ENCODE measurements at regions of chr5 and their contacts with region 1.

Region 1: GRCh38 chr5:173823711-173824528 is 64.2 kb upstream of the CPEB4 start:
- DNase-seq: no peak
- ATAC-seq: no peak
- H3K4me3 ChIP-seq: no peak overlapping the region
- H3K27ac ChIP-seq: peak overlapping the region; percentile 96
- H3K4me1 ChIP-seq: peaks cover 55% of the 10 kb centered on the region
- H3K27me3 ChIP-seq: no peaks in the 10 kb centered on the region
- CTCF ChIP-seq: no peak
- EP300 ChIP-seq: no peak
- POLR2A ChIP-seq: no peak
- RAD21 ChIP-seq: no peak

Region 2: DNA sequence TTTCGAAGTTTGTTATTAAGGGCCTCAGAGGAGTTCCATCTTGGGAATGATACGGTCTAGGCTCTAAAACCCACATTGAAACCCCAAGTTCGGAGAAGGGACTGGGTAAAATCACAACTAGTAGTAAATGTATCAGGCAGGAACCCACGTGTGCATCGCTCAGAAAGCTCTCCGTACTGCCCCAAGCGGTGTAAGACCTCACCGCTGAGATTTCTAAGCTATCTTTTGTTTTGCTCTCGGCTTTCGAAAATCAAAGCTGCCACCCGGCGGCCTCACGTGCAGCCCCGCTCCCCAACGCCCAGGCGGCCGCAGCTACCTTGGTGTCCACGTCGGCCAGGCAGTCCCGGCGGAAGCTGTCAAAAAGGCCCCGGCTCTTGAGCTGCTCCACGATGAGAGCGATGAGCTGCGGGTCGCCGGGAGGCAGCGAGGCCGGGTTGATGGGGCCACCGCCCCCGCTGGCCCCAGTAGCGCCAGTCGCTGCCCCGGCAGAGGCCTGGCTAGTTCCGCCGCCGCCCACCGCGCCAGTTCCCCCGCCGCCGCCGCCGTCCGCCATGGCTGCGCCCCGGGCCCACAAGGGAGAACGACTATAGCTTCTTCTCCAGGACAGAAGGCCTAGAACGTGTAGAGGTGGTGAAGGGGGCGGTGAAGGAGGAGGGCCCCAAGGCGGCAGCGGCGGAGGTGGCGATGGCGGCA is 207.9 kb before region 1 on chr5:
- CTCF ChIA-PET with region 1: interaction called, 8 read pairs
- POLR2A ChIA-PET with region 1: no interaction called
- RAD21 ChIA-PET with region 1: interaction called, 5 read pairs
- SMC1A ChIA-PET with region 1: interaction called, 6 read pairs
- in situ Hi-C with region 1: no loop called
- intact Hi-C with region 1: loop called (anchors 5 kb)
- DNase-seq: peak; percentile 43
- ATAC-seq: peak; percentile 86
- H3K4me3 ChIP-seq: peak overlapping the region; percentile 66
- H3K27ac ChIP-seq: peak overlapping the region; percentile 72
- H3K4me1 ChIP-seq: peaks cover 14% of the 10 kb centered on the region
- H3K27me3 ChIP-seq: no peaks in the 10 kb centered on the region
- CTCF ChIP-seq: peak; percentile 70 to 82 (median 77)
- EP300 ChIP-seq: no peak
- POLR2A ChIP-seq: peak; percentile 73
- RAD21 ChIP-seq: peak; percentile 29; the same call in 1 of the 2 replicates

Region 3: GRCh38 chr5:173679909-173680630 is 143.8 kb before region 1 on chr5:
- CTCF ChIA-PET with region 1: interaction called, 3 read pairs
- POLR2A ChIA-PET with region 1: interaction called, 3 read pairs
- RAD21 ChIA-PET with region 1: interaction called, 11 read pairs
- SMC1A ChIA-PET with region 1: interaction called, 14 read pairs
- in situ Hi-C with region 1: no loop called
- intact Hi-C with region 1: loop called (anchors 5 kb)
- DNase-seq: peak; percentile 47
- ATAC-seq: peak; percentile 84
- H3K4me3 ChIP-seq: no peak overlapping the region
- H3K27ac ChIP-seq: peak overlapping the region; percentile 72
- H3K4me1 ChIP-seq: peaks cover 22% of the 10 kb centered on the region
- H3K27me3 ChIP-seq: no peaks in the 10 kb centered on the region
- CTCF ChIP-seq: no peak
- EP300 ChIP-seq: no peak
- POLR2A ChIP-seq: no peak
- RAD21 ChIP-seq: no peak

Region 4: GRCh38 chr5:173745123-173745522 is 78.8 kb before region 1 on chr5:
- CTCF ChIA-PET with region 1: interaction called, 4 read pairs
- POLR2A ChIA-PET with region 1: interaction called, 20 read pairs
- RAD21 ChIA-PET with region 1: interaction called, 17 read pairs
- SMC1A ChIA-PET with region 1: interaction called, 42 read pairs
- in situ Hi-C with region 1: loop called (anchors 5 kb)
- intact Hi-C with region 1: loop called (anchors 2 kb)
- DNase-seq: peak; percentile 47
- ATAC-seq: peak; percentile 64
- H3K4me3 ChIP-seq: no peak overlapping the region
- H3K27ac ChIP-seq: peak overlapping the region; percentile 95
- H3K4me1 ChIP-seq: peaks cover 54% of the 10 kb centered on the region
- H3K27me3 ChIP-seq: no peaks in the 10 kb centered on the region
- CTCF ChIP-seq: no peak
- EP300 ChIP-seq: no peak; a peak in 1 of 4 replicates
- POLR2A ChIP-seq: no peak
- RAD21 ChIP-seq: 0 out of 2 replicates have a peak, but pooled peaks have one; percentile 0

Region 5: GRCh38 chr5:173887610-173888472 is 63.9 kb after region 1 on chr5 and contains the start of gene CPEB4:
- CTCF ChIA-PET with region 1: interaction called, 43 read pairs
- POLR2A ChIA-PET with region 1: interaction called, 240 read pairs
- RAD21 ChIA-PET with region 1: interaction called, 395 read pairs
- SMC1A ChIA-PET with region 1: interaction called, 283 read pairs
- in situ Hi-C with region 1: loop called (anchors 5 kb)
- intact Hi-C with region 1: loop called (anchors 1 kb)
- DNase-seq: peak; percentile 99
- ATAC-seq: peak; percentile 90
- H3K4me3 ChIP-seq: peak within 1 kb of the TSS; percentile 94
- H3K27ac ChIP-seq: peak within 1 kb of the TSS; percentile 100
- H3K4me1 ChIP-seq: peaks cover 30% of the 10 kb centered on the region
- H3K27me3 ChIP-seq: no peaks in the 10 kb centered on the region
- CTCF ChIP-seq: no peak
- EP300 ChIP-seq: peak in 1 of 2 experiments; percentile 41; a peak in 1 of 4 replicates
- POLR2A ChIP-seq: peak; percentile 92
- RAD21 ChIP-seq: 0 out of 2 replicates have a peak, but pooled peaks have one; percentile 10
- polyA plus RNA-seq, gene CPEB4: 6.9 to 20.3 TPM

Region 6: DNA sequence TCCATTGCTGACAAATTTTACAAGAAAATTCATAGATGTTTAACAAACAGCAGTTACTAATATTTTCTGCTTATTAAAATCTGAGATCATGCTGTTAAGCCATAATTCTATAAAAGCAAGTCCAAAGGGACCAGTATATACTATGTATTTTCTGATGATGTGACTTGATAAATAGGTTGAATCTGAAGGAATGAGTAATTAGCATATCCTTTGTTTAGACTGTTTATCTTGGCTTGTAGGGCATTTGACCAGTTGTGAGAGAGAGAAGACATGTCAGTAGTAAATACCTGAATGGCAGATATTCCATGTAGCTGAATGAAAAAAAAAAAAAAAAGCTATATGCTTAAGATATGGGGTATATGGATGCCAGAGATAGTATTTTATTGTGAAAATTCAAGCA is 78.8 kb after region 1 on chr5:
- CTCF ChIA-PET with region 1: interaction called, 4 read pairs
- POLR2A ChIA-PET with region 1: interaction called, 240 read pairs
- RAD21 ChIA-PET with region 1: interaction called, 395 read pairs
- SMC1A ChIA-PET with region 1: interaction called, 22 read pairs
- in situ Hi-C with region 1: no loop called
- intact Hi-C with region 1: no loop called
- DNase-seq: no peak
- ATAC-seq: no peak
- H3K4me3 ChIP-seq: 0 out of 2 replicates have a peak overlapping the region, but pooled peaks have one; percentile 0
- H3K27ac ChIP-seq: peak overlapping the region; percentile 59
- H3K4me1 ChIP-seq: peaks cover 28% of the 10 kb centered on the region
- H3K27me3 ChIP-seq: no peaks in the 10 kb centered on the region
- CTCF ChIP-seq: no peak
- EP300 ChIP-seq: no peak
- POLR2A ChIP-seq: no peak
- RAD21 ChIP-seq: no peak

Region 7: DNA sequence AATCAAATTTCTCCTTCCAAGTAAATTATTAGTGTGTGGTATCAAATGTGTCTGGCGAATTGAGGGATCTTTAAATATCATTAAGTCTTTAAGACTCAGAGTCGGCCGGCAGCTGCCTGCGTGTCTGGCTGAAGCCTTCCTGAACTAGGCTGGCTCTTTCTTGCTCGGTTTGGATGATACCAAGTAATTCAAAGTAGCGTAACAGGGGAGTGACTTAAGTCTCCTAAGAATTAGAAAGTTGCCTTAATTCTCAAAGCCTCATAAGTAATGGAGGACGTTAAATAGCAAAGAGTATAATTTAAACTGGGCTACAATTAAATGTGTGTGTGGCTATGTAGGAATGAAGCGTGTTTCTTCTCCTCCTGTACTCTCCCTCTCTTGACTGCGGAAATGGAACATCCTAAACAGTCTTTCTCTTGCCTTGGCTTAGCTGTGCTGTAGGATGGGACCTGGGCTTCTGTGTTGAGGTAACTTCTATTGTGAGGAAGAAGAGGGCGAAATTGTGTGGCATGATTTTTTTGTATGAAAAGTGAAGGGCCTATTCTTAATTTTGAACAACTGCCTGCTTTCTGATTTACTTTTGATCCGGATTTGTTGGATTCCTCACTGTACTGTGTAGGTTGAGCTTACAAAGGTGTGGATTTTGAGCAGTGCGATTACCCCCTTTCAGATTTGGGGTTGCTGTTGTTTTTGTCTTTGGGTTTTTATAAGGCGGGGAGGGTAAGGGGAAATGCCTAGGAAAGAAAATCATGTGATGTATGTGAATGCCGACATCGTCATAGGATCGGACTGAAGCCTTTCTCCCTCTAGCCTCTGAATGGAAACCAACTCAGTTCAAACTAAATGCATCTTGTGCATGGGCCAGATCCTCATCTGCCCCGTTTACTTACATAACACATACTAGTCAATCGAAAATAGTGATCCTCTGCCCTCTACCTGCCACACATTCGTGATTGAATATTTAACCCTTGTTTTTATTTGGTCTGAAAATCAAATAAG is 94.2 kb after region 1 on chr5:
- CTCF ChIA-PET with region 1: interaction called, 5 read pairs
- POLR2A ChIA-PET with region 1: interaction called, 17 read pairs
- RAD21 ChIA-PET with region 1: interaction called, 28 read pairs
- SMC1A ChIA-PET with region 1: interaction called, 40 read pairs
- in situ Hi-C with region 1: no loop called
- intact Hi-C with region 1: loop called (anchors 5 kb)
- DNase-seq: peak; percentile 86
- ATAC-seq: peak; percentile 93
- H3K4me3 ChIP-seq: peak overlapping the region; percentile 77
- H3K27ac ChIP-seq: peak overlapping the region; percentile 76
- H3K4me1 ChIP-seq: peaks cover 18% of the 10 kb centered on the region
- H3K27me3 ChIP-seq: no peaks in the 10 kb centered on the region
- CTCF ChIP-seq: peak in 2 of 3 experiments; percentile 9 to 42; a peak in 2 of 6 replicates
- EP300 ChIP-seq: no peak
- POLR2A ChIP-seq: peak; percentile 85
- RAD21 ChIP-seq: peak; percentile 47

Region 8: DNA sequence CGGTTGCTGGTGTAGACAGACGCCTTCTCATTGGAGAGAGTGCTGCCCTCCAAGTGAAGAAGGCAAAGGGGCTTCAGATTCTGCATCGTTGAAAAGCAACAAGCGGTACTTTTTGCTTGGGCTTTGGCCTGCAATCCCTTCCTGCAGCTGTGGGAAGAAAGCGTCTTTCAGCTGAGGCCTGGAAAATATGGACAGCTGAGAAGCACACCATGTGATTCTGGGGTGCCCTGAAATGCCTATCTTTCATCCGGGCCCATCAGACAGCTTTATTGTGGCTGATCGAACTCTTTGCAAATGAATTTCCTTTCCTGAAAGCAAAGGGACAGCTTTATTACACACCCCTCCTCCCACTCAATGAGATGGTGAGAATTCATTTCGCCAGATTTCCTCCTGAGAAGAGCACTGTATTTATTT is 295.6 kb after region 1 on chr5:
- CTCF ChIA-PET with region 1: no interaction called
- POLR2A ChIA-PET with region 1: no interaction called
- RAD21 ChIA-PET with region 1: no interaction called
- SMC1A ChIA-PET with region 1: no interaction called
- in situ Hi-C with region 1: no loop called
- intact Hi-C with region 1: no loop called
- DNase-seq: no peak
- ATAC-seq: no peak
- H3K4me3 ChIP-seq: no peak overlapping the region
- H3K27ac ChIP-seq: no peak overlapping the region
- H3K4me1 ChIP-seq: no peaks in the 10 kb centered on the region; the same call in 1 of the 2 replicates
- H3K27me3 ChIP-seq: peaks cover 0 to 2% of the 10 kb centered on the region in 2 experiments; a peak in 2 of 4 replicates
- CTCF ChIP-seq: no peak
- EP300 ChIP-seq: no peak
- POLR2A ChIP-seq: no peak
- RAD21 ChIP-seq: no peak

Measured in GM12878 (cell line).